H1 (cell line): ENCODE measurements at regions of chr3 and their contacts with region 1.

Region 1: DNA sequence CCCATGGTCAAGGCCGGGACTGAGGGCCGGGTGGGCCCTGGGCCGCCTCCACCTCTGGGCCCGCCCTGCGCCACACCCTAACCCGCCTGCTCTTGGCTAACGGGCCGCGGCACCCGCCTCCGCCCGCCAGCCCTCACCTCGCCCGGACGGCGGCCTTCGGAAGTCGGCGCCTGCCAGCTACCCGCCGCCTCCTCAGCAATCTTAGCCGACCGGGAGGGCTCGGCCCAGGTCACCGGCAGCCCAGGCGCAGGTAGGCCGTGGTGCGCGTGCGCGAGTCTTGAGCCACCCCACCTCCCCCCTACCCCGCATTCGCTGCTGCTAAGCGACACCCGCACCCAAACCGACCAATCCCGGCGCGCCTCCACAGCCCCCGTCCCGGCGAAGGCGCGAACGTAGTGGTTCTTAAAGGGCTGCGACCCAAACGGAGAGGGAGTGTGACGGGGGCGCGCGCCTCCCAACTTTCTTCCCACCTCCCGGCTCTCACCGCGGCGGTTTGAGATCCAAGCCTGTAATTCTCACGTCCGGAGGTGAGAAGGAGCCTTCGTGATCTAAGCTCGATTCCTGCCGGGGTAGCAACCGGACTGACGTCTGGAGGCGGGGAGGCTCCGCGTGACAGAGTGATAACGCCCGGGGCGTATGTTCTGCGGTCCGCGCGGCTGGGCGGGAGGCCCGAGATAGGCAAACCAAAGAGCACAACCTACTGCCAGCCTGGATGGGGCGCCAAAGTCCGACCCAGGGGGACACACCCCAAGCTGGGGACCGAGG is at the start of gene SEC22C:
- DNase-seq: peak; percentile 88 to 96
- H3K4me3 ChIP-seq: peak within 1 kb of the TSS; percentile 70 to 94 (median 86)
- H3K27ac ChIP-seq: peak within 1 kb of the TSS; percentile 77
- H3K4me1 ChIP-seq: peaks cover 2 to 14% (median 5%) of the 10 kb centered on the region in 4 experiments; a peak in 6 of 7 replicates
- H3K27me3 ChIP-seq: no peaks in the 10 kb centered on the region
- CTCF ChIP-seq: peak; percentile 28 to 47 (median 40); a peak in 3 of 4 replicates
- EP300 ChIP-seq: 0 out of 3 replicates have a peak, but pooled peaks of 1 of the 2 experiments have one; percentile 1
- POLR2A ChIP-seq: peak; percentile 81 to 85
- RAD21 ChIP-seq: peak; percentile 60; a peak in 3 of 4 replicates
- total RNA-seq, gene SEC22C: 38.3 and 38.5 TPM in 2 replicates

Region 2: GRCh38 chr3:42490243-42490642 is 91.6 kb before region 1 on chr3:
- CTCF ChIA-PET with region 1: no interaction called
- POLR2A ChIA-PET with region 1: no interaction called
- DNase-seq: peak in 1 of 2 experiments; percentile 43
- H3K4me3 ChIP-seq: no peak overlapping the region
- H3K27ac ChIP-seq: no peak overlapping the region
- H3K4me1 ChIP-seq: no peaks in the 10 kb centered on the region; a peak in 1 of 7 replicates
- H3K27me3 ChIP-seq: no peaks in the 10 kb centered on the region
- CTCF ChIP-seq: no peak
- EP300 ChIP-seq: no peak
- POLR2A ChIP-seq: no peak
- RAD21 ChIP-seq: no peak

Region 3: GRCh38 chr3:42518800-42519567 is 62.9 kb before region 1 on chr3:
- CTCF ChIA-PET with region 1: no interaction called
- POLR2A ChIA-PET with region 1: no interaction called
- DNase-seq: peak in 1 of 2 experiments; percentile 85
- H3K4me3 ChIP-seq: no peak overlapping the region
- H3K27ac ChIP-seq: no peak overlapping the region
- H3K4me1 ChIP-seq: no peaks in the 10 kb centered on the region
- H3K27me3 ChIP-seq: no peaks in the 10 kb centered on the region
- CTCF ChIP-seq: peak; percentile 65 to 80 (median 69)
- EP300 ChIP-seq: no peak
- POLR2A ChIP-seq: no peak
- RAD21 ChIP-seq: peak; percentile 60 to 71

Region 4: DNA sequence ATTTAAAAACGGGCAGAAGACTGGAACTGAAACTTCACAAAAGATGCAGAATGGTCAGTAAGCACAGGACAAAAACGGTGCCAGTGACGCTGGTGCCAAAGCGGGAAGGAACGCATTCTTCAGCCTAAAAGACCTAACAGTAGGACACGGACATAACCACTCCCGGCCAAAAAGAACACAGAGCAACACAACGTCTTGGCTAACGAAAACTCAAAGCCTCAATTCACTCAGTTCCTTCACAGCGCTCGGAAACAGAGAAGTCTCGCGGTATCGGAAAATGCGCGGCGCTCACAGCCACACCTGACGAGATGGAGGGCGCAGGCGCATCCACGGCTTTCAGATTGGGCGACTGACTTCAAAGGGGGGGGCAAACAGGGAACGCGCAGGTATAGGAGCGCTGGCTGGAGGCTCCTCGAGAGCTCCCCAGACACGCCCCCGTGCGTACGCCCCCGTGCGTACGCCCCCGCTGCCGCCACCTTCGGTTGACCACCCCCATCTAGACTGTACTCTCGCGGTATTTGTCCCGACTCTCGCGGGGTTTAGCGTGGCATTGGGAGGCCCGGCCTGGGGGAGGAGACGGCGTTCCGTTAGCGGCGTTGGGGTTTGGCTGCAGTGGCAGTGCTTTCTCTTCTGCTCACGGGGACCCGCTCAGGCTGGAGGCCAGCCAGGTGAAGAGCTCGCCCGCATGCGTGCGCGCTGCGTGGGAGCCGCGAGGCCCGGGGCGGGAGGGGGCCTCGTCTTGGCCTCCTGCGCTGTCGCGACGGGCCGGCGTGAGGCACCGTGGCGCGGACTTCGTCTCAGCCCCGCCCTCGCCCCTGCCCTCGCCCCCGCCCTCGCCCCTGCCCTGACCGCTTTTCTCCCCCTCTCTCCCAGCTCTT is 18.5 kb after region 1 on chr3 and contains the start of gene NKTR:
- CTCF ChIA-PET with region 1: interaction called, 21 read pairs
- POLR2A ChIA-PET with region 1: interaction called, 73 read pairs
- DNase-seq: peak; percentile 98 to 100
- H3K4me3 ChIP-seq: peak within 1 kb of the TSS; percentile 77 to 91 (median 88)
- H3K27ac ChIP-seq: peak within 1 kb of the TSS; percentile 91
- H3K4me1 ChIP-seq: peaks cover 0 to 6% (median 3%) of the 10 kb centered on the region in 4 experiments; a peak in 5 of 7 replicates
- H3K27me3 ChIP-seq: no peaks in the 10 kb centered on the region
- CTCF ChIP-seq: 0 out of 4 replicates have a peak, but pooled peaks of 1 of the 3 experiments have one; percentile 19
- EP300 ChIP-seq: no peak
- POLR2A ChIP-seq: peak; percentile 92 to 96
- RAD21 ChIP-seq: no peak
- total RNA-seq, gene NKTR: 56.6 and 62.2 TPM in 2 replicates

Region 5: DNA sequence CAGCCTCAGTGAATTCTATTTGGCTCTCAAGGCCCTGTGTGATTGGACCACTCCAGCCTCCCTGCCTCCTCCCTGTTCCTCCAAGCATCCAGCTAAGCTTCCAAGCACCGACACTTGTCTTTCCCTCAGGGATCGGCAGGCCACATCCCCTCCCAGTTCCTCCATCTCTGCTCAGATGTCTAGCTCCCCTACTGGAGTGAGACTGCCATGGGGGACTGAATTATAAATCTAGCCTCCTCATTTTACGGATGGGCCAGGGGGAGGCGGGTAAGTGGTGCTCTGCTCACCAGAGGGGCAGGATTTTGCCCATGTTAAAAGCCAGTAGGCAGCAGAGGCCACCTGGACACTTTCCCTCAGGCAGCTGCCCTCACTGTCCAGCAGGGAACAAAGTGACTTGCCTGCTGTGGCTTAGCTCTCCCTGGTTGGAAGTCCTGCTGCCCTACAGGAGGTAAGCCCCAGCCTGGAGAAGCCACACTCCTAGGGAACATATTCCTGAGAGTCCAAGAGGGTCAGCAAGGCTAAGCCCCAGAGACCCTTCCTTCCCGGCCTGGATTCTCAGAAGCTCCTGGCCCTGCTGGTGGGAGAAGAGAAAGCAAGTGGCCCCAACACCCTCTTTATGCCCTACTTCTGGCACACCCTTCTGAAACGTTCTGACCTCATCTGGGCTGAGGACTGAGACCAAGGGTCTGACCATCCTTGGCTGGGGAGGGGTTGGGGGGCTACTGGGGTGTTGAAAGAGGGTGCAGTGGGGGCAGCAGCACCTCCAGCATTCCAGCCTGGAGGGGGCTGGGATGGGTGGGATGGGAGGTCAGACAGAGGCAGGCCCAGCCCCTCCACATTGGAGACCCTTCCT is 129.8 kb after region 1 on chr3:
- CTCF ChIA-PET with region 1: no interaction called
- POLR2A ChIA-PET with region 1: no interaction called
- DNase-seq: peak in 1 of 2 experiments; percentile 44
- H3K4me3 ChIP-seq: no peak overlapping the region
- H3K27ac ChIP-seq: no peak overlapping the region
- H3K4me1 ChIP-seq: no peaks in the 10 kb centered on the region; a peak in 2 of 7 replicates
- H3K27me3 ChIP-seq: no peaks in the 10 kb centered on the region; a peak in 1 of 7 replicates
- CTCF ChIP-seq: peak in 2 of 3 experiments; percentile 26 to 28; a peak in 2 of 4 replicates
- EP300 ChIP-seq: no peak
- POLR2A ChIP-seq: no peak
- RAD21 ChIP-seq: 0 out of 4 replicates have a peak, but pooled peaks of 1 of the 2 experiments have one; percentile 10